ENCODE measurements at regions of chr5 and their contacts with region 1.

Region 1: GRCh38 chr5:32174011-32174870 is at the start of gene GOLPH3:
- DNase-seq: peak; percentile 89 to 94 (median 91)
- H3K4me3 ChIP-seq: peak within 1 kb of the TSS; percentile 62 to 69
- H3K4me3 Mint-ChIP-seq: peak within 1 kb of the TSS; percentile 94 to 99 (median 98)
- H3K27ac ChIP-seq: peak within 1 kb of the TSS; percentile 98
- H3K27ac Mint-ChIP-seq: peak within 1 kb of the TSS; percentile 93 to 99 (median 99)
- H3K4me1 ChIP-seq: peaks cover 31% of the 10 kb centered on the region
- H3K4me1 Mint-ChIP-seq: peaks cover 24 to 52% (median 31%) of the 10 kb centered on the region in 4 donors
- H3K27me3 ChIP-seq: no peaks in the 10 kb centered on the region
- H3K27me3 Mint-ChIP-seq: peaks cover 2 to 7% of the 10 kb centered on the region in 2 donors
- total RNA-seq, gene GOLPH3: 67.4 to 74.5 TPM

Region 2: GRCh38 chr5:31531888-31532710 is 642.1 kb before region 1 on chr5 and contains the starts of genes C5orf22 and DROSHA:
- CTCF ChIA-PET with region 1: no interaction called
- POLR2A ChIA-PET with region 1: interaction called, 5 read pairs
- intact Hi-C with region 1: loop called (anchors 5 kb)
- DNase-seq: peak; percentile 87 to 93 (median 88)
- H3K4me3 ChIP-seq: peak within 1 kb of the TSS; percentile 90 to 94
- H3K4me3 Mint-ChIP-seq: peak within 1 kb of the TSS; percentile 98 to 100 (median 98)
- H3K27ac ChIP-seq: peak within 1 kb of the TSS; percentile 67
- H3K27ac Mint-ChIP-seq: peak within 1 kb of the TSS; percentile 87 to 99 (median 96)
- H3K4me1 ChIP-seq: peaks cover 48% of the 10 kb centered on the region
- H3K4me1 Mint-ChIP-seq: peaks cover 35 to 76% (median 54%) of the 10 kb centered on the region in 4 donors
- H3K27me3 ChIP-seq: no peaks in the 10 kb centered on the region
- H3K27me3 Mint-ChIP-seq: no peaks in the 10 kb centered on the region
- total RNA-seq, gene C5orf22: 26.9 to 30.9 TPM
- total RNA-seq, gene DROSHA: 76.1 to 92.6 TPM

Region 3: DNA sequence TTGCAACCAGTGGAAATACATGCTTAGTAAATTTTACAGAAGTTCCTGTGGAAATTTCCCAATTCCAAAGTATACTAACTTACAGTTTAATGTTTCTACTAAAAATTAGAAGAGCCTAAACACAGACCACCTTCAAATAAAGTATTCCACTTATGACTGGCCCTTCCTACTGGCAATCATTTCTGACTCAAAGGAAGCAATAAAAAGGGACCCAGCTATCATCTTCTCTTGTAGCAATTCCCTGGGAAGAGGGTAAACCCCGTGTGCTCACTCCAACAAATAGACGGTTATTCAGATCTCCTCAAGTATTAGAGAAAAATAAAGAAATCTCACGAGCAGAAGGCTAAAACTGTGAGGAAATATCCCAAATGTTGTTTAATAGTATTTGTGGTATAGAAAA is 43.4 kb before region 1 on chr5:
- CTCF ChIA-PET with region 1: interaction called, 3 read pairs
- POLR2A ChIA-PET with region 1: interaction called, 4 read pairs
- intact Hi-C with region 1: loop called (anchors 5 kb)
- DNase-seq: no peak
- H3K4me3 ChIP-seq: no peak overlapping the region
- H3K4me3 Mint-ChIP-seq: peak overlapping the region in 1 of 8 donors; percentile 21
- H3K27ac ChIP-seq: no peak overlapping the region
- H3K27ac Mint-ChIP-seq: peak overlapping the region in 1 of 7 donors; percentile 71
- H3K4me1 ChIP-seq: peaks cover 6% of the 10 kb centered on the region
- H3K4me1 Mint-ChIP-seq: peaks cover 36 to 66% (median 48%) of the 10 kb centered on the region in 4 donors
- H3K27me3 ChIP-seq: no peaks in the 10 kb centered on the region
- H3K27me3 Mint-ChIP-seq: no peaks in the 10 kb centered on the region

Region 4: DNA sequence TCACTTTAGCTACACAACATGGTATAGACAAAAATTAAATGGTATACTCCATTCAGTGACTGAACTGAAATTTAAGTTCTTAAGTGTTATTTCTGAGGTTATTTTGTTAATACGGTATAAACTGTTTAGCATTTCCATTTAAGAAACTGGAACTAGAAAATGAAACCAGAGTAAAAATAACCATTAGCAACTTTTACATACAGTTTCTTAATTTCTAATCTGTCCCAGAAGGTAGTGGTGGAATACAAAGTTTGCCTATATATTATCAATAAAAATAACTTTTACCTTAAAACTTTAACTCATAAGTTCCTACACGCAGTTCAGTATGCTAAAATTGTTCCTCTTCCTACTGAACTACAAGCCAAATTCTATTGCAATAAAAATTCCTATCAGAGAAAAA is 10.5 kb before region 1 on chr5:
- CTCF ChIA-PET with region 1: interaction called, 3 read pairs
- POLR2A ChIA-PET with region 1: interaction called, 12 read pairs
- intact Hi-C with region 1: loop called (anchors 1 kb)
- DNase-seq: no peak
- H3K4me3 ChIP-seq: no peak overlapping the region
- H3K4me3 Mint-ChIP-seq: peak overlapping the region in 5 of 8 donors; percentile 2 to 46 (median 30)
- H3K27ac ChIP-seq: no peak overlapping the region
- H3K27ac Mint-ChIP-seq: peak overlapping the region in 1 of 7 donors; percentile 65
- H3K4me1 ChIP-seq: peaks cover 63% of the 10 kb centered on the region
- H3K4me1 Mint-ChIP-seq: peaks cover 27 to 47% (median 35%) of the 10 kb centered on the region in 4 donors
- H3K27me3 ChIP-seq: no peaks in the 10 kb centered on the region
- H3K27me3 Mint-ChIP-seq: no peaks in the 10 kb centered on the region

Region 5: GRCh38 chr5:32312647-32313523 is 138.6 kb after region 1 on chr5 and contains the start of gene MTMR12:
- CTCF ChIA-PET with region 1: no interaction called
- POLR2A ChIA-PET with region 1: interaction called, 19 read pairs
- intact Hi-C with region 1: loop called (anchors 1 kb)
- DNase-seq: peak; percentile 99 to 100 (median 100)
- H3K4me3 ChIP-seq: peak within 1 kb of the TSS; percentile 59 to 77
- H3K4me3 Mint-ChIP-seq: peak within 1 kb of the TSS; percentile 91 to 98 (median 94)
- H3K27ac ChIP-seq: peak within 1 kb of the TSS; percentile 67
- H3K27ac Mint-ChIP-seq: peak within 1 kb of the TSS; percentile 93 to 98 (median 97)
- H3K4me1 ChIP-seq: peaks cover 28% of the 10 kb centered on the region
- H3K4me1 Mint-ChIP-seq: peaks cover 24 to 50% (median 33%) of the 10 kb centered on the region in 4 donors
- H3K27me3 ChIP-seq: no peaks in the 10 kb centered on the region
- H3K27me3 Mint-ChIP-seq: no peaks in the 10 kb centered on the region
- total RNA-seq, gene MTMR12: 26.3 to 26.4 TPM

Region 6: GRCh38 chr5:32444431-32445286 is 270.4 kb after region 1 on chr5 and contains the start of gene ZFR:
- CTCF ChIA-PET with region 1: no interaction called
- POLR2A ChIA-PET with region 1: interaction called, 6 read pairs
- intact Hi-C with region 1: loop called (anchors 2 kb)
- DNase-seq: peak; percentile 93 to 95 (median 95)
- H3K4me3 ChIP-seq: peak within 1 kb of the TSS; percentile 53 to 88
- H3K4me3 Mint-ChIP-seq: peak within 1 kb of the TSS; percentile 93 to 97 (median 94)
- H3K27ac ChIP-seq: peak within 1 kb of the TSS; percentile 90
- H3K27ac Mint-ChIP-seq: peak within 1 kb of the TSS; percentile 91 to 97 (median 96)
- H3K4me1 ChIP-seq: peaks cover 43% of the 10 kb centered on the region
- H3K4me1 Mint-ChIP-seq: peaks cover 19 to 40% (median 30%) of the 10 kb centered on the region in 4 donors
- H3K27me3 ChIP-seq: no peaks in the 10 kb centered on the region
- H3K27me3 Mint-ChIP-seq: no peaks in the 10 kb centered on the region
- total RNA-seq, gene ZFR: 60.1 to 65.4 TPM

Region 7: GRCh38 chr5:32916648-32917047 is 742.4 kb after region 1 on chr5:
- CTCF ChIA-PET with region 1: no interaction called
- POLR2A ChIA-PET with region 1: no interaction called
- intact Hi-C with region 1: no loop called
- DNase-seq: no peak
- H3K4me3 ChIP-seq: no peak overlapping the region
- H3K4me3 Mint-ChIP-seq: no peak overlapping the region
- H3K27ac ChIP-seq: no peak overlapping the region
- H3K27ac Mint-ChIP-seq: no peak overlapping the region
- H3K4me1 ChIP-seq: no peaks in the 10 kb centered on the region
- H3K4me1 Mint-ChIP-seq: no peaks in the 10 kb centered on the region
- H3K27me3 ChIP-seq: no peaks in the 10 kb centered on the region
- H3K27me3 Mint-ChIP-seq: no peaks in the 10 kb centered on the region

Measured in CD4-positive, alpha-beta memory T cell (primary cell).